Activated naive CD4-positive, alpha-beta T cell treated with anti-CD3 and anti-CD28 coated beads, Interleukin-2, amount 10 ng/mL, durations not matched to agents 7 days and 5 days (primary cell): ENCODE measurements at regions of chr14 and their contacts with region 1.

Region 1: DNA sequence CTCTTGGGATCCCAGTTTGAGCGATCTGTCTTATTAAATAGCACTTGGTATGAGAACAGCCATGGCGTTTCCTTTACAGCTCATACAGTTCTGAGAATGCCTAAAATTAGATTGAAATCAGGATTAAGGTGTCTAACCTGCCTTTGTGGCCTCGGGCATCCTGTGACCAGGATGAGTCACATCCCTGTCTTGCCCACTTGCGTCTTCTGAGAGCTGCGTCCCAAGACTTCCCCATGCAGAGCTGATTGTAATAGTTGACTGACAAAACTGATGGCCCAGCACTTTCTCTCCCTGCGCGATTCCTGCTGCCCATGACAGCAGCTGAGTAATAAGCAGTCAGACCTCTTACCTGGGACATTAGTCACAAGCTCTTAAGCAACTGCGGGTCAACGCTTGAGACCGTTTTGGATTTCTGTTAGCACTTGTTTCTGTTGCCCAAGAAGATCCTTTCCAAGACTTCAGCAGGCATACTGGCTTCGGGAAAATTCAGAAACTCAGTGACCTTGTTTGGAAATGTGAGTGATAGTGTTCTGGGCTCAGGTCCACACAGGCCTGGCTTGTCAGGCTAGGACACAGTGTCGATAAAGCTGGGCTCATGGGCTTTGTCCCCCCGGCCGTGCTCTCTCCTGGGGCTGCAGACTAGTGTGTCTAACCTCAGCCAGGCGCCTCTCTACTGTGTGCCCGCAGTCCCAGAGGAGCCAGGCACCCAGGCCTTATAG is 169.9 kb upstream of the HIF1A start:
- DNase-seq: peak; percentile 75
- H3K4me3 Mint-ChIP-seq: peak overlapping the region; percentile 11
- H3K27ac Mint-ChIP-seq: peak overlapping the region; percentile 81
- H3K4me1 Mint-ChIP-seq: peaks cover 77% of the 10 kb centered on the region
- H3K27me3 Mint-ChIP-seq: no peaks in the 10 kb centered on the region

Region 2: DNA sequence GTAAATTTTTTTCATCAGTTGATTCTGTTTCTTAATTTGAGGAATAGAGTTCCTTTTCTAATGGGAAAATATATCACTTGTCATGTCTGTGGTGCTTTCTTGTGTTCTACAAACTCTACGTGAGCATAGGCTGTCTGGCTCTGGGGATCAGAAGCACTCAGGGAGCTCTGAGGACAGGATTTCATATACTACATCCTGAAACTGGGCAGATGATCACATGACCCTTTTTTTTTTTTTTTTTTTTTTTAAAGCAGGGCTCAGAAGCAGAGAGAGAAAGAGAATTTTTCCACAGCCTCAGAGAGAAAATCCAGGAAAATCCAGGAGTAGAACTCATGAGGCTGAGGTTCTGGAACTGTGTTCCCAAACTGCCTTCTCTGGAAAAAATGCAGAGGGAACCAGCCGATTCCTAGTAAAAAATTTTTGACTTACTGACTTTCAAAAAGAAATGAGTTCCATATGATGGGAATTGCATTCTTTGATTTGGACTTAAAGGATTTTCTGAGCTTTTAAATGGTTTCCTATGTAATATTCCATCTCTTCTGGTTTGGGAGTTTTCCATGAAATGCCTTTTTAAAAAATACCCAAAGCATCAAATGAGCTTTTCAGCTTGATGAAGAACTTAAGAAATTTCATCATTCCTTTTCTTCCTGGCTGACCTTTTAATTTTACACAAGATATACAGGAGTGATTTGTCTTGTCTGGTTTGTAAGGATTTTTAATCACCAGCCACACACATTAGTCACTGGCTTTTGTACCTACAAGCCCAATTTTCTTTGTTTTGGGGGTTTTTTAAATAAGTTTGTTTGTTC is 13.2 kb before region 1 on chr14:
- CTCF ChIA-PET with region 1: interaction called, 10 read pairs
- DNase-seq: no peak
- H3K4me3 Mint-ChIP-seq: peak overlapping the region; percentile 2
- H3K27ac Mint-ChIP-seq: peak overlapping the region; percentile 86
- H3K4me1 Mint-ChIP-seq: peaks cover 86% of the 10 kb centered on the region
- H3K27me3 Mint-ChIP-seq: no peaks in the 10 kb centered on the region